ENCODE measurements at regions of chr5 and their contacts with region 1.

Region 1: GRCh38 chr5:35626108-35626507 is 8.4 kb downstream of the SPEF2 start:
- DNase-seq: no peak
- H3K4me3 ChIP-seq: no peak overlapping the region
- H3K27ac ChIP-seq: no peak overlapping the region
- H3K4me1 ChIP-seq: no peaks in the 10 kb centered on the region
- H3K27me3 ChIP-seq: no peaks in the 10 kb centered on the region
- CTCF ChIP-seq: no peak

Region 2: DNA sequence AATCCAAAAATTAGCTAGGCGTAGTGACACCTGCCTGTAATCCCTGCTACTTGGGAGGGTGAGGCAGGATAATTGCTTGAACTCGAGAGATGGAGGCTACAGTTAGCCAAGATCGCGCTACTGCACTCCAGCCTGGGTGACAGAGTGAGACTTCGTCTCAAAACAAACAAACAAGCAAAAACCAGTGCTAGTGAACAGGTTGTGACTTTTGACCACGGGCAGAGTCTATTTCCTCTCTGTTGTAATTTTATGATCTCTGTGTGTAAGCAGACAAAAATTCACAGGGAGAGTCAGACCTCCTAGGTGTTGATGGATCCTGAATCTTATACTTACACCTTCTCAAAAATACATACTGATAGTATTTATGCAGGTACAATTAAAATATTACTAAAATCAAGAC is 57.4 kb after region 1 on chr5:
- CTCF ChIA-PET with region 1: no interaction called
- dilution Hi-C with region 1: loop called (anchors 5 kb)
- in situ Hi-C with region 1: no loop called
- intact Hi-C with region 1: no loop called
- DNase-seq: no peak
- H3K4me3 ChIP-seq: no peak overlapping the region
- H3K27ac ChIP-seq: no peak overlapping the region
- H3K4me1 ChIP-seq: no peaks in the 10 kb centered on the region
- H3K27me3 ChIP-seq: no peaks in the 10 kb centered on the region
- CTCF ChIP-seq: no peak

Measured in mammary epithelial cell (primary cell).